ENCODE measurements at regions of chr3 and their contacts with region 1.

Region 1: GRCh38 chr3:189355481-189356201 is 183.9 kb downstream of the TPRG1 start:
- DNase-seq: peak; percentile 30
- H3K4me3 Mint-ChIP-seq: no peak overlapping the region
- H3K27ac Mint-ChIP-seq: peak overlapping the region; percentile 91
- H3K4me1 Mint-ChIP-seq: peaks cover 32% of the 10 kb centered on the region
- H3K27me3 Mint-ChIP-seq: no peaks in the 10 kb centered on the region
- CTCF ChIP-seq: no peak

Region 2: DNA sequence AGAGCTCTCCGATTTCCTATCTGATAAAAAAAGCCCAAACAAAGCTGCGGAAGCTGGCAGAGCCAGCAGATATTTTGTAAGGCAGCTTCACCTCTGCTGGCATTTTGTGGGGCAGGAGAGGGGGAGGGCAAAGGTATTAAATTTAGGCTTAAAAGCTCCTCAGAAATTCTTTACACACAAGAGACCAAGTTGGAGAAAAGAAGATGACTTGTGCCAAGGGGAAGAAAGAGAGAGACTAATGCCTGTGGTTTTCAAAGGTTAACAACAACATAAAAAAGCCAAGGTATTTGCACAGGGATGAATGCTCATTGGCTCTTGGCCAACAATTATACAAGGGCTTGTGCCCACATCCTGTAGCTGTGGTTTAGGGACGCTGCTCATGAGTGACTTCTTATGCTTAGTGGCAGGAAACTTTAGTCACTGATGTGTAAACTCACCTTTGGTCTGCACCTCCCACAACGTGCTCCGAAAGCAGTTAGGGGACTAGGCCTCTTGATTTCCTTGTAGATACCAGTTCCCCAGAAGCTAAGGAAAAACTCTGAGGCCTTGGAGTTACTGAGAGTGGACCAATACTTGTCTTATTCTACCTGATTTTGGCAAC is 31.0 kb before region 1 on chr3:
- CTCF ChIA-PET with region 1: interaction called, 9 read pairs
- intact Hi-C with region 1: loop called (anchors 2 kb)
- DNase-seq: peak; percentile 93
- H3K4me3 Mint-ChIP-seq: peak overlapping the region; percentile 22
- H3K27ac Mint-ChIP-seq: peak overlapping the region; percentile 75
- H3K4me1 Mint-ChIP-seq: peaks cover 54% of the 10 kb centered on the region
- H3K27me3 Mint-ChIP-seq: peaks cover 16% of the 10 kb centered on the region
- CTCF ChIP-seq: no peak

Region 3: GRCh38 chr3:189369636-189370035 is 14.0 kb after region 1 on chr3:
- CTCF ChIA-PET with region 1: interaction called, 12 read pairs
- intact Hi-C with region 1: no loop called
- DNase-seq: no peak
- H3K4me3 Mint-ChIP-seq: no peak overlapping the region
- H3K27ac Mint-ChIP-seq: no peak overlapping the region
- H3K4me1 Mint-ChIP-seq: peaks cover 24% of the 10 kb centered on the region
- H3K27me3 Mint-ChIP-seq: no peaks in the 10 kb centered on the region
- CTCF ChIP-seq: no peak

Region 4: GRCh38 chr3:189394599-189395121 is 39.0 kb after region 1 on chr3:
- CTCF ChIA-PET with region 1: interaction called, 5 read pairs
- intact Hi-C with region 1: loop called (anchors 1 kb)
- DNase-seq: no peak
- H3K4me3 Mint-ChIP-seq: no peak overlapping the region
- H3K27ac Mint-ChIP-seq: peak overlapping the region; percentile 47
- H3K4me1 Mint-ChIP-seq: peaks cover 52% of the 10 kb centered on the region
- H3K27me3 Mint-ChIP-seq: no peaks in the 10 kb centered on the region
- CTCF ChIP-seq: no peak